CD8-positive, alpha-beta memory T cell (primary cell): ENCODE measurements at regions of chr12 and their contacts with region 1.

Region 1: DNA sequence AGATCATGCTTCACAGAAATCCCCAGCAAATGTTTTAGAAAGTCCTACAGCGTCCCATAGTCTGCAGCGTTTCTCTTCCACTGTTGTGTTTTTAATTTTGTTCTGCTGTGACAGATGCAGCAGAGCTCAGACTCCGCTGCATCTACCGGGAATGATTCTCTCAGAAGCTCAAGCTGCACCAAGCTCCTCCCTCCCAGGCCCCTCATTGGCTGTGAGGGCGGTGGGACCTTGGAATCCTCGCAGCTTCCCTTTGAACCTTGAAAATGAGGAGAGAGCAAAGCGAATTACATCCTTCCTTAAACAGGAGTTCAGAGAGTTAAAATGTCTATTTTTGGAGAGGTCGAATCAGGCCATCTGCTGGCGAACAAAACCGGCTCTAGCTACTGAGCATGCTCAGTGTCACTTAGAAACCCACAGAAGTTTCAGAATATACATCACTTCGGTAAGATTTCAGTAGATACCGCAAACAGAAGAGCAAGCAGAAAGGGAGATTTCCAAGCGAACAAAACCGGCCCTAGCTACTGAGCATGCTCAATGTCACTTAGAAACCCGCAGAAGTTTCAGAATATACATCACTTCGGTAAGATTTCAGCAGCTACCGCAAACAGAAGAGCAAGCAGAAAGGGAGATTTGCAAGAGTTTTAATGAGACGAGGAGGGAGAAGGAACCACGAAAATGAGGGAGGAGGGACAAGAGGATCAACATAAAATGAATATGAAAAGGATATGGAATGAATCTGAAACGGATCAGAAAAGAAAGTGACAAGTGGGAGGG is at the start of gene ABCD2:
- DNase-seq: peak; percentile 53 to 88 (median 83)
- H3K4me3 ChIP-seq: peak within 1 kb of the TSS; percentile 71
- H3K4me3 Mint-ChIP-seq: no peak within 1 kb of the TSS
- H3K27ac ChIP-seq: peak within 1 kb of the TSS; percentile 76
- H3K27ac Mint-ChIP-seq: peak within 1 kb of the TSS in 1 of 8 donors; percentile 82
- H3K4me1 ChIP-seq: peaks cover 32% of the 10 kb centered on the region
- H3K4me1 Mint-ChIP-seq: peaks cover 35 to 51% (median 51%) of the 10 kb centered on the region in 3 donors
- H3K27me3 ChIP-seq: no peaks in the 10 kb centered on the region
- H3K27me3 Mint-ChIP-seq: no peaks in the 10 kb centered on the region
- total RNA-seq, gene ABCD2: 4.5 to 5.0 TPM

Region 2: GRCh38 chr12:39671898-39672875 is 52.3 kb after region 1 on chr12:
- CTCF ChIA-PET with region 1: interaction called, 32 read pairs
- POLR2A ChIA-PET with region 1: interaction called, 7 read pairs
- DNase-seq: no peak
- H3K4me3 ChIP-seq: no peak overlapping the region
- H3K4me3 Mint-ChIP-seq: no peak overlapping the region
- H3K27ac ChIP-seq: no peak overlapping the region
- H3K27ac Mint-ChIP-seq: peak overlapping the region in 1 of 8 donors; percentile 50
- H3K4me1 ChIP-seq: peaks cover 19% of the 10 kb centered on the region
- H3K4me1 Mint-ChIP-seq: peaks cover 59 to 76% (median 75%) of the 10 kb centered on the region in 3 donors
- H3K27me3 ChIP-seq: no peaks in the 10 kb centered on the region
- H3K27me3 Mint-ChIP-seq: peaks cover 0 to 2% of the 10 kb centered on the region in 2 donors

Region 3: DNA sequence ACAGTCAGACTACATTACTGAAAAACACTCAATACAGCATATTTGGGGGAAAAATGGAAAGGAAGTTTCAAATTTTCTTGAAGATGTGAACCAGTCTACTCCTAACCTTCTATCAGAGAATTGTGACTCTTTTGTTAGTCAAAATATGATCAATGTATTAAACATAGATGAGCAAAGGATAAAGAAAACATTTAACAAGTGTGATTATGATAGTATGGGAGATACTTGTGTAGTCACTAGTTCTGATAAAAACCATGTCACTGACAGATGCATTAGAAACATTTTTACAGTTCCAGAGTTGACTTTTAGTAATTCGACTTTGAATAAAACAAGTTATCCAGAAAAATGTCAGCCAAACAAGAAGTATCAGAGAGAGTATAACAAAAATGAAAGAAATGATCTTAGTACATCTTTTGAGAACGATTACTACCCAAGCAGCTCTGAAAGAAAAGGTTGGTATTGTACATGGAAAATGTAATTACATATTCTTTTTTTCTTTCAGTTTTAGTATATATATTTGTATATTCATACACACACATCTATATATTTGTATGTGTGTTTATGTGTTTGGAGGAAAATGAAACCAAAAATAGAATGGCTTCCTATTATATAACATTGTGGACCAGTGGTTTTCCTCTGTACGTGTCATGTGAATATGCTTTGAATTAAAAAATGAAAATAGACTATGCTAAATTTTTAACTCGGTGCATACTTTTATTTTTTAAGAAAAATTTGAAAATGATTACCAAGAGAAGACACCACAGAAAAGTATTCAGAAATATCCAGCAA is 63.0 kb after region 1 on chr12:
- CTCF ChIA-PET with region 1: interaction called, 4 read pairs
- POLR2A ChIA-PET with region 1: interaction called, 14 read pairs
- DNase-seq: peak in 2 of 5 donors; percentile 56 to 57
- H3K4me3 ChIP-seq: peak overlapping the region; percentile 51
- H3K4me3 Mint-ChIP-seq: peak overlapping the region; percentile 81 to 93 (median 86)
- H3K27ac ChIP-seq: peak overlapping the region; percentile 75
- H3K27ac Mint-ChIP-seq: peak overlapping the region; percentile 96 to 99 (median 99)
- H3K4me1 ChIP-seq: peaks cover 25% of the 10 kb centered on the region
- H3K4me1 Mint-ChIP-seq: peaks cover 28 to 44% (median 34%) of the 10 kb centered on the region in 3 donors
- H3K27me3 ChIP-seq: no peaks in the 10 kb centered on the region
- H3K27me3 Mint-ChIP-seq: no peaks in the 10 kb centered on the region

Region 4: GRCh38 chr12:39692258-39692853 is 72.5 kb after region 1 on chr12:
- CTCF ChIA-PET with region 1: interaction called, 12 read pairs
- POLR2A ChIA-PET with region 1: no interaction called
- DNase-seq: peak in 2 of 5 donors; percentile 13 to 28
- H3K4me3 ChIP-seq: no peak overlapping the region
- H3K4me3 Mint-ChIP-seq: no peak overlapping the region
- H3K27ac ChIP-seq: no peak overlapping the region
- H3K27ac Mint-ChIP-seq: no peak overlapping the region
- H3K4me1 ChIP-seq: no peaks in the 10 kb centered on the region
- H3K4me1 Mint-ChIP-seq: peaks cover 0 to 6% (median 5%) of the 10 kb centered on the region in 3 donors
- H3K27me3 ChIP-seq: no peaks in the 10 kb centered on the region
- H3K27me3 Mint-ChIP-seq: no peaks in the 10 kb centered on the region

Region 5: GRCh38 chr12:39736406-39736805 is 116.6 kb after region 1 on chr12:
- CTCF ChIA-PET with region 1: no interaction called
- POLR2A ChIA-PET with region 1: no interaction called
- DNase-seq: no peak
- H3K4me3 ChIP-seq: no peak overlapping the region
- H3K4me3 Mint-ChIP-seq: no peak overlapping the region
- H3K27ac ChIP-seq: no peak overlapping the region
- H3K27ac Mint-ChIP-seq: no peak overlapping the region
- H3K4me1 ChIP-seq: no peaks in the 10 kb centered on the region
- H3K4me1 Mint-ChIP-seq: no peaks in the 10 kb centered on the region
- H3K27me3 ChIP-seq: no peaks in the 10 kb centered on the region
- H3K27me3 Mint-ChIP-seq: no peaks in the 10 kb centered on the region